ENCODE measurements at regions of chr18 and their contacts with region 1.

Region 1: DNA sequence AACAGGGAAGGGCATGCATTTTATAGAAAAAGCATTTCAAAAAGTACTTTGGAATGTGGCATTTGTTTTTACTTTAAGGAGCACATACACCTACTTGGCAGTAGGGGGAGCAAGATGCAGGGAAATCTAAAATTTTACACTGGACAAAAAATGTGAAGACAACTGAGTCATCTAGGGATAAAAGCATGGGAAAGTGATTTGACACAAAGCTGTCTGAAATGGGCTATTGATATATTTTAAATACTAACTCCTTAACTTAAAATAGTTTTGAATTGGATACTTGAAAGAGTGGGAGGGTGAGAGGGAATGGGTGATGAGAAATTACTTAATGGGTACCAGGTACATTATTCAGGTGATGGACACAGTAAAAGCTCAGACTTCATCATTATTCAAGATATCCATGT is 15.8 kb downstream of the TMEM200C start:
- DNase-seq: no peak
- ATAC-seq: no peak
- H3K4me3 ChIP-seq: no peak overlapping the region
- H3K27ac ChIP-seq: no peak overlapping the region
- H3K4me1 ChIP-seq: no peaks in the 10 kb centered on the region
- H3K27me3 ChIP-seq: no peaks in the 10 kb centered on the region; the same call in 1 of the 2 replicates
- CTCF ChIP-seq: peak; percentile 74; the same call in 1 of the 2 replicates

Region 2: GRCh38 chr18:6482198-6482977 is 602.9 kb after region 1 on chr18:
- CTCF ChIA-PET with region 1: no interaction called
- POLR2A ChIA-PET with region 1: no interaction called
- in situ Hi-C with region 1: no loop called
- intact Hi-C with region 1: loop called (anchors 10 kb)
- DNase-seq: peak; percentile 12
- ATAC-seq: peak; percentile 85
- H3K4me3 ChIP-seq: no peak overlapping the region
- H3K27ac ChIP-seq: no peak overlapping the region
- H3K4me1 ChIP-seq: no peaks in the 10 kb centered on the region
- H3K27me3 ChIP-seq: no peaks in the 10 kb centered on the region
- CTCF ChIP-seq: peak; percentile 78

Region 3: GRCh38 chr18:6521795-6522418 is 642.4 kb after region 1 on chr18:
- CTCF ChIA-PET with region 1: interaction called, 3 read pairs
- POLR2A ChIA-PET with region 1: no interaction called
- in situ Hi-C with region 1: no loop called
- intact Hi-C with region 1: loop called (anchors 1 kb)
- DNase-seq: peak; percentile 68
- ATAC-seq: no peak
- H3K4me3 ChIP-seq: no peak overlapping the region
- H3K27ac ChIP-seq: no peak overlapping the region
- H3K4me1 ChIP-seq: no peaks in the 10 kb centered on the region
- H3K27me3 ChIP-seq: no peaks in the 10 kb centered on the region
- CTCF ChIP-seq: peak; percentile 83